ENCODE measurements at regions of chr20 and their contacts with region 1.

Region 1: DNA sequence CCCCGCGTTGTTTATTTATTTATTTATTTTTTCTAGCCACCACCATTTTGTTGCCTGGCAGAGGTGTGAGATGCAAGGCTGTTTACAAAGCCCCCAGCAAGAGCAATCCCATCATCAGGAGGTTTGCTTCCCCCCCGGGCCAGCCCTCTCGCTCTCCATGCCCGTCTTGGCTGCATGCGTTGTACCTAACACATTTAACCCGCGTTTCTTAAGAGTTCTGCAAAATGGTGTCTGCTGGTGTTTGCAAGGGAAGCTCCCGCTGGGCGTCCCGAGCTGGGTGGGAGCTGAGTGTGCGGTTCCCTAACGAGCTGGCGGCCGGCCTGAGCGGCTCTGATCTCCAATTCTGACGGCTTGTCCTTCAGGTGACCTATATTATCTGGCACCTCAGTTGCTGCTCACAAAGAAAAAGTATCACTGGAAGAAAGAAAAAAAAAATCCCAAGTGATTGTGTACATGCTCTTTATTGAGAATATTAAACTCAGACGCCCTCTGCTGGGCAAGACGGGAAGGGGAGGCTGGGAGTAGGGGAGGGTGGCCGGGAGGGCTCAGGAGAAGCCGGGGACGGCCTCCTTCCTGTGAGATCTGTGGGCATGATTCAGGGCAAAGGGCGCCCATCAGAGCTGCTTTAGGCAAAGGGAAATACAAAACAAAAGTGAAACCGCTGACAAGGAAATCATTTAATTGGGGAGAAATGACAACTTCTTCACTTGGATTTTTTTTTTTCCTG is 154.8 kb downstream of the BCAS1 start:
- DNase-seq: peak; percentile 95
- ATAC-seq: peak; percentile 91 to 93

Region 2: GRCh38 chr20:53594068-53595017 is 321.3 kb before region 1 on chr20:
- intact Hi-C with region 1: loop called in 1 of 2 experiments (anchors 5 kb)
- DNase-seq: peak; percentile 97
- ATAC-seq: peak; percentile 93 to 94

Region 3: GRCh38 chr20:53869466-53870258 is 45.9 kb before region 1 on chr20:
- intact Hi-C with region 1: loop called in 1 of 2 experiments (anchors 5 kb)
- DNase-seq: peak; percentile 56
- ATAC-seq: peak; percentile 88 to 90

Region 4: DNA sequence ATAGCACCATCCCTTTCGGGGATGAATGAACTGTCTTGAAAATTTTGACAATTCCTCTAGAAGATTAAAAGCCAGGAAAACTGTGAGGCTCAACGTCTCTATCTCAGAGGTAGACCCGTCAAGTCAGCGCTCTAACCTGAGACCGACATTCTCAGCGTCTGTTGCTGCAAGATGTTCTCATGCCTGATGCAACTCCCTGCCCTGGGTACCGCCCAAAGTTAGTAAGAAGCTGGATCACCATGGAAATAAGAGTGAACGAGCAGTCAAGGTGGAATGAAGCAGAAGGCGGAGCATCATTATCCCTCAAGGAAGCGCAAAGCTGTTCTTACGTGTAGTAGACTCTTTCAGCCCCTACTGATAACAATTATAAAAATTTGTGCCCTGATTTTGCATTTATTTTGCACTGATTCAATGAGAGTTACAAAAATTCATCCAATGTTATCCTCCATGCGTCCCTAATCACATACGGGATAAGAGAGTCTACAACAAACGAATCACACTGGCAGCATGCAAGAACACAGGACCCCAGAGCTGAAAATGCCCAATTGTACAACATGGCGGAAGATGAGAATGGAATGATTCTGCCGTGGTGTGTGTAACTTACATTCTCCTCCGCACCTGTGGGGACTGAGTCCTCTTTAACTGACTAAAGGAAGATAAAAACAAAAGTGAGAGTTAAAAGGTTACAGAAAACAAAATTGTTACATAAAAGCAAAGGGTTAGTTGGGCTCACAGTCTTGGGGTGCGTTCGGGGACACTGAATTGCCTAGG is 59.4 kb after region 1 on chr20:
- intact Hi-C with region 1: no loop called
- DNase-seq: no peak
- ATAC-seq: no peak

Measured in left cardiac atrium (tissue), 4 donors.